Activated naive CD4-positive, alpha-beta T cell treated with anti-CD3 and anti-CD28 coated beads for 36 hours (primary cell): ENCODE measurements at regions of chr15 and their contacts with region 1.

Region 1: DNA sequence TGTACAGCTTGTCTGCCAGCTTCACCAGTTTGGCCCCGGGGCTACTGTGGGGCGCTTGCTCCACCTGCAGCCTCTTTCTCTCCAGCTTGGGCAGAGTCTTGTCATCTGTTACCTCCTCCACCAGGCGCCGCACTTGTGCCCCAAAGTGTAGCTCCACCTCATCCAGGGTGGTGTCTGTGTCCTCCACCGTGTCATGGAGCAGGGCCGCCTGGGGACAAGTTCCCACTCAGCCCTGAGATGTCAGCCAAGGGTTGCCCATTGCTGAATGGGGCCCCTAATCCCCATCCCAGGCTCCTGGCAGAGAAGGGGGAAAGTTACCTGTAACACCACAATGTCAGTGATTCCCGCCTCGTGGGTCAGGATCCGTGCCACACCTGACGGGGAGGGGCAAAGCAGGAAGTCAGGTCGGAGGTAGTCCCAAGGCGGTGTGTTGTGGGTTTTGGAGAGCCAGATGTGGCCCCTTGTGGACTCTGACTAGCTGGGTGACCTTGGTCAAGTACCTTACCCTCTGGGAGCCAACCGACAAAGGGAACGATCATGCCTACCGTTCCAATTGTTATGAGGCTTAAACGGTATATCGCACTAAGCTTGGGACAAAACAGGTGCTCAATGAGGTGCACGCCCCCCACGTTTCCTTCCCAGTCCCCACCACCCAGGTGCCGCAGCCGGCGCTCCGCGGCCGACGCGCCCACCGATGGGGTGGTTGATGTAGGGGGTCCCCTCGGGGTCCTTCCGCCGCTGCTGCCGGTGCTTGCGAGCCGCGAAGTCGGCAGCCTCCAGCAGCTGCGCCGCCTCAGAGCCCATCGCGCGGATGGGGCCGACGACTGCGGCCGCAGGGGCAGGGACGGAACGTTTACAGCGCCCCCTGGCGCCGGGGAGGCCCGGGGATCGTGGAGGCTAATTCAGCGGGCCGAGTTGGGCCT is at the start of gene HDDC3:
- DNase-seq: peak; percentile 95
- H3K4me3 Mint-ChIP-seq: peak within 1 kb of the TSS; percentile 99
- H3K27ac Mint-ChIP-seq: peak within 1 kb of the TSS; percentile 100
- H3K4me1 Mint-ChIP-seq: peaks cover 41% of the 10 kb centered on the region
- H3K27me3 Mint-ChIP-seq: no peaks in the 10 kb centered on the region
- total RNA-seq, gene HDDC3: 49.8 to 51.3 TPM

Region 2: DNA sequence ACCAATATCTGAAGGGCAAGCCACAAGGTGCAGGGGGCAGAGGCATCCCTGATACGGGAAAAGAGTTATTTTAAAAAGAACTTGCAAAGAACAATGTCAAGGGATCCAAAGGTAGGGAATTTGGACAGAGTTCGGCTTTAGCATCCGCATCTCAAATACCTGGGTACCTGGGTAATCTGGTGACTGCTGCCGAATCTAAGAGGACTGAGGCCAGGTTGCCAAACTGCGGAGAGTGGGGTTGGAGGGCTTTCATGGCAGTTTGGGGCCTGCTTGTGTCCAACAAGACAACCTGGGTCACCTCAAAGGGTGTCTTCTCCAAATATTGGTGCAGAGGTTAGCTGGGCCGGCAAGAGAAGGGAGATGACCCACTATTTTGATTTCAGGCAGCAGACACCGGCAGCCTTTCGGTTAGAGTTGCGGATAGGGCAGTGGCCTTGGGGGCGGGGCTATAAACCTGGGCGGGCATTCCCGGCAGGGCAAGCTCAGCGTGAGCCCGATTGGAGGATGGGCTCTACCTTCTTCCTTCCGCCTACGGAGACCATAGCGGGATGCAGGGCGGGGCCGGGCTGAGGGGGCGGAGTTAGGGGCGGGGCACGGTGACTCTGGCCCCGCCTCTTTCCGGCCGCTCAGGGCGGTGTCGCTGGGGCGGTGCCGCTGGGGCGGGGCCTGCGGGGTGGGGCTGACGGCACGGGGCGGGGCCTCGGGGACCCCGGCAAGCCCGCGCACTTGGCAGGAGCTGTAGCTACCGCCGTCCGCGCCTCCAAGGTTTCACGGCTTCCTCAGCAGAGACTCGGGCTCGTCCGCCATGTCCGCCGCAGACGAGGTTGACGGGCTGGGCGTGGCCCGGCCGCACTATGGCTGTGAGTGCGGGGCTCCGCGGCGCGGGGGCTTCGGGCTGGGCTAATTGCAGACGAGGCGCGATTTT is 544.2 kb before region 1 on chr15 and contains the start of gene IQGAP1:
- CTCF ChIA-PET with region 1: no interaction called
- intact Hi-C with region 1: loop called (anchors 10 kb)
- DNase-seq: peak; percentile 99
- H3K4me3 Mint-ChIP-seq: peak within 1 kb of the TSS; percentile 89
- H3K27ac Mint-ChIP-seq: peak within 1 kb of the TSS; percentile 90
- H3K4me1 Mint-ChIP-seq: peaks cover 39% of the 10 kb centered on the region
- H3K27me3 Mint-ChIP-seq: no peaks in the 10 kb centered on the region
- total RNA-seq, gene IQGAP1: 136 to 143 TPM

Region 3: DNA sequence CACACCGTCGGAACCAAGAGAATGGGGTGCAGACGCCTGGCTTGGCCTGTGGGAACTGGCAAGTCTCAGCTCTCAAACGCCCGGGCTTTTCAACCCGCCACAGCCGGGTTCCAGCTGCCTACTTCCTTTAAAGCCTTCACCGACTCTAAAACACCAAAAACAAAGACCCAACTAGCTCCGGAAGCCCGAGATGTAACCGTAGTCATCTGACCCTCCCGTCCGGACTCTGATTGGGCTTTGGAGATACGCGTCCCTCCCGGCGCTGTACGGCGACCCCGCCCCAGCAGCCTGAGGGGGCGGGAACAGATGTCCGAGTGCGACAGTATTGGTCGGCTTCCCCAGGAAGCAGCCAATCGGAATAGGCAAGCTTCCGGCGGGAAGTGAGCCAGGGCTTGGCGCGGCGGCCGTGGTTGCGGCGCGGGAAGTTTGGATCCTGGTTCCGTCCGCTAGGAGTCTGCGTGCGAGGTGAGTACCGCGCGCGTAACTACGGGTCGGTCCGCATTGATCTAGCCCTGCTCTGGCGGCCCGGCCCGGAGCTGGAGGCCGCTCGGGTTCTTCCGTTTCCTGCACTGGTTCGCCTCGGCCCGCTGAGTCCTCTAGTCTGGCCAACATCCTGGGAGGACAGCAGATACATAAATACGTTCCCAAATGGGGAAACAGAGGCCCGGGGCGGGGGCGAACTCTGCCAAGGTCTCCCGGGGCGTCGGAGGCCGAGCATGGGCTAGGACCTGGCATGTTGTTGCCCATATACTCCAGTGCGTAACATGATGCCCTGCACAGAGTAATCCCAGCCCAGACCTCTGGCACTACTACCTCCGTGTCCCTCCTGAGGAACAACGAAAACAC is 214.8 kb before region 1 on chr15 and contains the start of gene BLM:
- CTCF ChIA-PET with region 1: interaction called, 16 read pairs
- intact Hi-C with region 1: loop called (anchors 1 kb)
- DNase-seq: peak; percentile 97
- H3K4me3 Mint-ChIP-seq: peak within 1 kb of the TSS; percentile 87
- H3K27ac Mint-ChIP-seq: peak within 1 kb of the TSS; percentile 90
- H3K4me1 Mint-ChIP-seq: peaks cover 24% of the 10 kb centered on the region
- H3K27me3 Mint-ChIP-seq: no peaks in the 10 kb centered on the region
- total RNA-seq, gene BLM: 62.9 to 70.4 TPM

Region 4: GRCh38 chr15:90886041-90886614 is 45.9 kb before region 1 on chr15:
- CTCF ChIA-PET with region 1: interaction called, 35 read pairs
- intact Hi-C with region 1: no loop called
- DNase-seq: peak; percentile 88
- H3K4me3 Mint-ChIP-seq: no peak overlapping the region
- H3K27ac Mint-ChIP-seq: peak overlapping the region; percentile 13
- H3K4me1 Mint-ChIP-seq: peaks cover 26% of the 10 kb centered on the region
- H3K27me3 Mint-ChIP-seq: peaks cover 3% of the 10 kb centered on the region

Region 5: GRCh38 chr15:90946538-90946937 is 14.5 kb after region 1 on chr15:
- CTCF ChIA-PET with region 1: interaction called, 31 read pairs
- intact Hi-C with region 1: no loop called
- DNase-seq: no peak
- H3K4me3 Mint-ChIP-seq: no peak overlapping the region
- H3K27ac Mint-ChIP-seq: no peak overlapping the region
- H3K4me1 Mint-ChIP-seq: no peaks in the 10 kb centered on the region
- H3K27me3 Mint-ChIP-seq: no peaks in the 10 kb centered on the region

Region 6: DNA sequence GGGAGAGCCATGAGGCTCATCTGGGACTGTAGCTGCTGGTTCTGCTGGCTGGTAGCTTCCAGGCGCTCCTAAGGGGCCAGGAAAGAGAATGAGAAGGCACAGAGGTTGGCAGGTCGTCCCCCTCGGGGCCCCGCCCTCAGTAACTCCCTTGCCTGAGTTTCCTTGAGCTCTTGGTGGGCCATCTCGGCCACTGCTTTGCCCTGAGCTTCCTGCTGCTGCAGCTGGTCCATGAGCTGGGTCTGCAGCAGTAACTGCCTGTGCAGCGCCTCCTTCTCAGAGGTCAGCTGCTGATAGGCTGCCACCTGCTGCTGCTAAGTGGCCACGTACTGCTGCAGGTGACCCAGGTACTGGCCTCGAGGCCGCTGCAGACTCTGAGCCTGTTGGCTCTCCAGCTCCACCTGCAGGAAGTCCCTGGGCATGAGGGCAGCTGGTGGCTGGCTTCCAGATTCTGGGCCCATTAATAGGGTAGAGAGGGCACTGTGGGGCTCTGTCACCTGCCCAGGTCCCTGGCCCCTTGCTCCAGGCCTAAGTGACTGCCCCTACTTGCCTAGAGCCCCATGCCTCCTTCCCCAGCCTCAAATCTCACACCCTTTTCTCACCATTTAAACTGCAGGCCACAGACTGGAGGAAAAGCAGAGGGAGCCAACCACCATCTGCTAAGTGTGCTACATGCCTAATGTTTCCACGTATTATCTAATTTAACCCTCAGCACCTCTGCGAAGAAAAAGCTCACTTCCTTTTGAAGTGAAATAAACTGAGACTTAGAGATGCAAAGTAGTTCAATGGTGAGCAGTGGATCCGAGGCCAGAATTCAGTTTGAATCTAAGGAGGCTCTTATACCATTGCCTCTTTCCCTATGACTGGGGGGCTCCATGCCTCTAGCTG is 101.2 kb after region 1 on chr15:
- CTCF ChIA-PET with region 1: interaction called, 19 read pairs
- intact Hi-C with region 1: no loop called
- DNase-seq: peak; percentile 79
- H3K4me3 Mint-ChIP-seq: no peak overlapping the region
- H3K27ac Mint-ChIP-seq: no peak overlapping the region
- H3K4me1 Mint-ChIP-seq: no peaks in the 10 kb centered on the region
- H3K27me3 Mint-ChIP-seq: no peaks in the 10 kb centered on the region